Gastrocnemius medialis (tissue), 4 donors: ENCODE measurements at regions of chr6 and their contacts with region 1.

Region 1: GRCh38 chr6:17987576-17988421 is at the start of gene KIF13A:
- DNase-seq: peak; percentile 55 to 67
- ATAC-seq: peak; percentile 66 to 68
- H3K4me3 ChIP-seq: peak within 1 kb of the TSS; percentile 68 to 91 (median 86)
- H3K27ac ChIP-seq: peak within 1 kb of the TSS; percentile 91 to 99 (median 94)
- H3K4me1 ChIP-seq: peaks cover 22 to 36% of the 10 kb centered on the region in 2 donors
- H3K27me3 ChIP-seq: no peaks in the 10 kb centered on the region
- CTCF ChIP-seq: peak; percentile 21 to 54 (median 45)
- POLR2A ChIP-seq: peak; percentile 63 to 78
- total RNA-seq, gene KIF13A: 47.4 to 72.9 (median 63.8) TPM

Region 2: GRCh38 chr6:17706580-17707370 is 281.0 kb before region 1 on chr6 and contains the start of gene NUP153:
- in situ Hi-C with region 1: no loop called
- intact Hi-C with region 1: loop called (anchors 2 kb)
- DNase-seq: peak; percentile 97 to 99
- ATAC-seq: peak; percentile 82 to 86
- H3K4me3 ChIP-seq: peak within 1 kb of the TSS; percentile 66 to 96 (median 92)
- H3K27ac ChIP-seq: peak within 1 kb of the TSS; percentile 96 to 100 (median 99)
- H3K4me1 ChIP-seq: peaks cover 29 to 30% of the 10 kb centered on the region in 2 donors
- H3K27me3 ChIP-seq: no peaks in the 10 kb centered on the region
- CTCF ChIP-seq: peak in 2 of 5 experiments; percentile 27 to 30
- POLR2A ChIP-seq: peak; percentile 93 to 96
- total RNA-seq, gene NUP153: 29.7 to 44.2 (median 37.9) TPM

Region 3: GRCh38 chr6:17725083-17725482 is 262.7 kb before region 1 on chr6:
- in situ Hi-C with region 1: no loop called
- intact Hi-C with region 1: no loop called
- DNase-seq: no peak
- ATAC-seq: no peak
- H3K4me3 ChIP-seq: no peak overlapping the region
- H3K27ac ChIP-seq: no peak overlapping the region
- H3K4me1 ChIP-seq: no peaks in the 10 kb centered on the region
- H3K27me3 ChIP-seq: no peaks in the 10 kb centered on the region
- CTCF ChIP-seq: no peak
- POLR2A ChIP-seq: no peak

Region 4: DNA sequence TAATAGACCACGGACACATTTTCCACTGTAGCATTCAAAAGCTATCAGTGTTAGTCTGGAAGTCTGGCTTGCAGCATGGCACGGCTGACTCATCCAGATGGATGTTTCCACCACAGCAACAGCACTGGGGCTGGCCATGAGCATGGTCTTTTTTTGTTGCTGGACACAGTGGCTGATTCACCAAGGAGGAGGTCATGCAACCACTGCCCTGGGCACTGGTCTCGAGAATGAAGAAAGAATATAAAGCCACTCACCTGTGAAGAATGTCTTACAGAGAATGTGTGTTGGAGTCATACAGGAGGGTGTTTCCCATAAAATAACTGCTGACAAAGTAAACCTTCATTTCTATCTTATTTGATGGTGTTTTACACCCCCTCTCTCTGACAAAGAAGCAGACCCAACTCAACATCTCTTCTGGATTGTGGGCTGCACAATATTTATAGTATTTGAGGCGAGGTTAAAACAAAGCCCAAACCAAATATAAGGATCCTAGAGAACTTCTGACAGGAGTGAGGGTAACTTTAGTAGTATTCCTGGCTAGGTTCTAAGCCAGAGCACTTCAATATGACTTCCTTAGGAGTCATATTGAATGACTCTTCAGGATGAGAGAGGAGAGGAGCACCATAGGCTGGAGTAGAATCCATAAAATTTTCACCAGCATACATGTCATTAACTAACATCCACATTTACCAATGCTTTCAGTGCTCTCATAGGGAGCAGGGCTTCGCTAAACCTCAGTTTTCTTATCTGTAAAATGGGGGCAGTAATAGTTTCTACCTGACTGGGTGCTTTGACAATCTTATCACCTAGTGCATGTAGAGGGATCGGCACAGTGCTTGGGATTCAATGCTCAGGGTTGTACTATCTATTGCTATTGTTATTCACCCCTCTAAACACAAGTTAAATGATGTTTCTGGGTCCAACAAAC is 121.7 kb before region 1 on chr6:
- in situ Hi-C with region 1: loop called in 3 of 4 experiments (anchors 10 to 25 kb)
- intact Hi-C with region 1: loop called (anchors 1 kb)
- DNase-seq: peak; percentile 85 to 93
- ATAC-seq: peak; percentile 98
- H3K4me3 ChIP-seq: no peak overlapping the region
- H3K27ac ChIP-seq: peak overlapping the region; percentile 81 to 88 (median 86)
- H3K4me1 ChIP-seq: peaks cover 46 to 68% of the 10 kb centered on the region in 2 donors
- H3K27me3 ChIP-seq: no peaks in the 10 kb centered on the region
- CTCF ChIP-seq: no peak
- POLR2A ChIP-seq: no peak

Region 5: DNA sequence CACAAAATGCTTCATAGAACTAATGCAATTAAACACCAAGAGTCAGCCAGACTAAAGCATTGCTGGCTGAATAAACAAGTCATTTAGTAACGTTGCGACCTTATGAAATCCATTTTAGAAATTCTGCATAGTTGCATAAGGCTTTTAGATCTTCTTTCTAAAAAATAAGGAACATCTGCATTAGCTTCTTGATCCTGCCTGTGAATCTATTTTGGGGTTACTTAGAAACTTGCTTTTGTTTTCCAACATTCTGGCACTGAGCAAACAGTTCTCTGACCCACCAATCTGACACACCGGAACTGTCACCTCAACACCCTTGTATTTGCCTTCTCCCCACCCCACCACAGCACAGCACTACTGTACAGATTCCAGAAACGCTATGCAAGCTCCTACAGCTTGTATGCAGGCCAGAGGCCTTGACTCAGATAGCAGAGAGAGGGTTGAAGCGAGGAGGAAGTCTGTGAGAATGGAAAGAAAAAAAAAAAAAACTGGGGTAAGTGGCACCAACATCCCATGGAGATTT is 55.4 kb before region 1 on chr6:
- in situ Hi-C with region 1: no loop called
- intact Hi-C with region 1: loop called (anchors 5 kb)
- DNase-seq: peak in 1 of 2 donors; percentile 33
- ATAC-seq: peak; percentile 40 to 45
- H3K4me3 ChIP-seq: no peak overlapping the region
- H3K27ac ChIP-seq: peak overlapping the region; percentile 72 to 79 (median 76)
- H3K4me1 ChIP-seq: peaks cover 75 to 98% of the 10 kb centered on the region in 2 donors
- H3K27me3 ChIP-seq: no peaks in the 10 kb centered on the region
- CTCF ChIP-seq: no peak
- POLR2A ChIP-seq: no peak

Region 6: DNA sequence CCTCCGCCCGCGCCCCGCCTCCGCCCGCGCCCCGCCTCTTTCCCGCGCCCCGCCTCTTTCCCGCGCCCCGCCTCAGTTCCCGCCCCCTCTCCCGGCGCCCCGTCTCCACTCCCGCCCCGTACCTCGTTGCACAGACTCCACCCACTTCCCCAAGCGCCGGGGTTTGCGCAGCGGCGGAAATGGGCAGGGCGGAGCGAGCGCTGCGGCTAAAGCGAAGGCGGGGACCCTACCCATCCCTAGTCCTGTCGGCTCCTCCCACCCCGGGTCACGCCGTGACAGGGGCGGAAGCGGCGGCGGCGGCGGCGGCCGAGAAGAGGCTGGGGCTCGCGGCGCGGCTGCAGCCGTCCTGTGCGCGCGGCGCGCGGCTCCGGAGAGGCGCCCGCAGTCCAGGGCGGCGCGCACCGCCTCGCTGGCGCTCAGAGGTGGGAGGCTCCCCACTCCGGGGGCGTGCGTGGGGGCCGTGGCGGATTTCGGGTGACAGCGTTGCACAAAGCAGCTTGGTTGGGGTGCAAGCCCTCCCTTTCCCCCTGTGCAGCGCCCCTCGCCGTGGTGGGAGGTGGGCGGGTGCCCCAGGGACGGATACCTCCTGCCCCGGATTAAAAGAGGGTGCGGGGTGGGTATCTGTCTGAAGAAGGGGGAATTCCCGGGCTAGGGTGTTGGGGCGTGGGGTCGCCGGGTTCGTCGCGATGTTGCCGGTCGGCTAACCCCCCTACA is 167.5 kb after region 1 on chr6 and contains the start of gene KDM1B:
- in situ Hi-C with region 1: no loop called
- intact Hi-C with region 1: loop called (anchors 10 kb)
- DNase-seq: peak; percentile 98 to 99
- ATAC-seq: peak; percentile 87 to 93
- H3K4me3 ChIP-seq: peak within 1 kb of the TSS; percentile 84 to 95 (median 86)
- H3K27ac ChIP-seq: peak within 1 kb of the TSS; percentile 82 to 94 (median 92)
- H3K4me1 ChIP-seq: peaks cover 14 to 19% of the 10 kb centered on the region in 2 donors
- H3K27me3 ChIP-seq: no peaks in the 10 kb centered on the region
- CTCF ChIP-seq: no peak
- POLR2A ChIP-seq: peak; percentile 91 to 94
- total RNA-seq, gene KDM1B: 14.5 to 29.9 (median 26.0) TPM